ENCODE measurements at regions of chrX and their contacts with region 1.

Region 1: GRCh38 chrX:40169193-40170101 is 71.7 kb upstream of the BCOR start:
- DNase-seq: peak; percentile 78
- ATAC-seq: peak; percentile 33
- H3K4me3 ChIP-seq: peak overlapping the region; percentile 20 to 29
- H3K27ac ChIP-seq: peak overlapping the region; percentile 98
- H3K4me1 ChIP-seq: peaks cover 60 to 97% of the 10 kb centered on the region in 2 experiments
- H3K27me3 ChIP-seq: no peaks in the 10 kb centered on the region
- CTCF ChIP-seq: peak in 2 of 3 experiments; percentile 54 to 63; a peak in 4 of 6 replicates
- POLR2A ChIP-seq: no peak
- RAD21 ChIP-seq: no peak

Region 2: GRCh38 chrX:38803586-38804431 is 1365.6 kb before region 1 on chrX:
- CTCF ChIA-PET with region 1: no interaction called
- POLR2A ChIA-PET with region 1: no interaction called
- RAD21 ChIA-PET with region 1: no interaction called
- intact Hi-C with region 1: loop called (anchors 10 kb)
- DNase-seq: peak; percentile 77
- ATAC-seq: peak; percentile 84
- H3K4me3 ChIP-seq: peak overlapping the region; percentile 64 to 77
- H3K27ac ChIP-seq: peak overlapping the region; percentile 98
- H3K4me1 ChIP-seq: peaks cover 15 to 43% of the 10 kb centered on the region in 2 experiments
- H3K27me3 ChIP-seq: no peaks in the 10 kb centered on the region
- CTCF ChIP-seq: no peak
- POLR2A ChIP-seq: no peak
- RAD21 ChIP-seq: no peak

Region 3: GRCh38 chrX:39504850-39505259 is 664.6 kb before region 1 on chrX:
- CTCF ChIA-PET with region 1: no interaction called
- POLR2A ChIA-PET with region 1: no interaction called
- RAD21 ChIA-PET with region 1: no interaction called
- intact Hi-C with region 1: no loop called
- DNase-seq: no peak
- ATAC-seq: no peak
- H3K4me3 ChIP-seq: no peak overlapping the region
- H3K27ac ChIP-seq: no peak overlapping the region
- H3K4me1 ChIP-seq: no peaks in the 10 kb centered on the region
- H3K27me3 ChIP-seq: no peaks in the 10 kb centered on the region
- CTCF ChIP-seq: no peak
- POLR2A ChIP-seq: no peak
- RAD21 ChIP-seq: no peak

Region 4: GRCh38 chrX:39814391-39814790 is 355.1 kb before region 1 on chrX:
- CTCF ChIA-PET with region 1: no interaction called
- POLR2A ChIA-PET with region 1: no interaction called
- RAD21 ChIA-PET with region 1: no interaction called
- intact Hi-C with region 1: loop called (anchors 5 kb)
- DNase-seq: peak; percentile 15
- ATAC-seq: peak; percentile 73
- H3K4me3 ChIP-seq: no peak overlapping the region
- H3K27ac ChIP-seq: no peak overlapping the region
- H3K4me1 ChIP-seq: no peaks in the 10 kb centered on the region
- H3K27me3 ChIP-seq: no peaks in the 10 kb centered on the region
- CTCF ChIP-seq: peak; percentile 45 to 55 (median 48); a peak in 5 of 6 replicates
- POLR2A ChIP-seq: no peak
- RAD21 ChIP-seq: peak; percentile 78